Psoas muscle (tissue), 8 donors: ENCODE measurements at regions of chr22 and their contacts with region 1.

Region 1: DNA sequence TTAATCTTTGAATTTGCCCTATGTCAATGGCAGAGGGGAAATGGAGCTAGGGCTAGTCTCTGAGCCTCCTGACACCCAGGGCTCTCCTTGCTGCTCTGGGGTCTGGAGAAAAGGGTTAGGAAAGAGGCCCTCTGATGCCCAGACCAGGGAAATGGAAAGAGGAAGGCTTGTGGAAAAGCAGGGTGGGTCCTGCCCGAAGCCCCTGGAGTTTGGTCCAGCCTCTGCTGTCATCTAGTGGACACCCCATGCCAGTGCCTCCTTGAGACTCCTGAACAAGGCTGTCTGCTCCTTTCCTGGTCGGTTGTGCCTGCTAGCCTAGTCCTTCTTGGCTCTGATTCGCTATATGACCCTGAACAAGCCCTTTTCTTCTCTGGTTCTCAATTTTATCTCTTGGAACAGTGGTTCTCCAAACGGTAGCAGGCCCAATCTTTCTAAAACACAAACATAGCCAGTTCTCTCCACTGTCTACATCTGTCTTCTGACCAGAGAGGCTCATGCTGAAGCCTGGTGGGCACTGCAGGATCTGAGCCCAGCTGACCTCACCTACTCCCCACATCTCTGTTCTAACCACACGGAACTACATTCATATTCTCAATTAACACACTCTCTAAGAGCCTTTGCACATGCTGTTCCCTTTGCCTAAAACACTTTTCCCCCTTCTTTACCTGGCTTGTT is 8.8 kb upstream of the PLA2G3 start:
- DNase-seq: peak; percentile 66 to 80
- ATAC-seq: peak; percentile 93 to 96 (median 94)
- H3K4me3 ChIP-seq: no peak overlapping the region
- H3K27ac ChIP-seq: peak overlapping the region; percentile 53
- H3K4me1 ChIP-seq: no peaks in the 10 kb centered on the region
- H3K27me3 ChIP-seq: no peaks in the 10 kb centered on the region
- CTCF ChIP-seq: peak; percentile 96

Region 2: DNA sequence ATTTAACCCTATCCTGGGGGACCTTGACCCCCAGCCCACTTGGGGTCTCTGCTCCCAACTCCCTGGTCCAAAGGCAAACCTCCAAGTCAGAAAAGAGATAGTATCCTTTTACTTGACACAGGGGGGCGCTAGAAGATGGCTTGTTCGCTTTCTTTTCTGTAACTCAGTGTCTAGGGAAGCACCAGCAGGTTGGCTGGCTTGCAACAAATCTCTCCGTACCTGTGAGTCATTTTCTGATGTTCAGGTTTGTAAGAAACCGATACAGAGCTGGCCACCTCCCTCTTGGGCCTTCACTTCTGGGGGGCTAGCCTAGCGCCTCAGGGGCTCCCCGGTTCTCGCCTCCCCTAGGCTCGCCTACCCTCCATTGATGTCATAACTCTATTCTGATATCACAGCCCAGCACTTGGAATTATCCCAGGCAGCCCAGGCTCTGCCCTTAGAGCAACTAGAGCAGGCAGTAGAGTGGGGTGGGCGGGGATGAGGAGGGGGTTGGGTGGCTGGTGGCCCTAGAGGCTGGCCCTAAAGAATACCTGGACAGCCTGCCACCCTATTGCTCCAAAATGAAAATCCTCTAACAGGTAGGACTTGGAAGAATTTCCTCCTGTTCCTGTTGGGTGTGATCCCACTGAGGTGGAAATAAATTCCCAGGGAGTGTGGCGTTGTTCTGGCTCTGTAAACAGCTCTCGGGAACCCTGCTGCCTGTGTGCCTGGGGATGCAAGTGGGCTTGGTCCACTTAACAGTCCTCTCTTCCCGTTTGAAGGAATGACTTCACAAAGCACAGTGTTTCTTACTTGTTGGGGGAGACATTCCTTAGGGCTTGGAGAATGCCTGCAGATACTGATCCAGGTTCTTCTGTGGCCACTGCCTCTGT is 385.0 kb before region 1 on chr22:
- intact Hi-C with region 1: loop called in 1 of 2 experiments (anchors 10 kb)
- DNase-seq: peak in 1 of 2 donors; percentile 21
- ATAC-seq: peak; percentile 65 to 85 (median 72)
- H3K4me3 ChIP-seq: no peak overlapping the region
- H3K27ac ChIP-seq: no peak overlapping the region
- H3K4me1 ChIP-seq: no peaks in the 10 kb centered on the region
- H3K27me3 ChIP-seq: no peaks in the 10 kb centered on the region
- CTCF ChIP-seq: peak; percentile 59

Region 3: GRCh38 chr22:30947816-30948454 is 201.2 kb before region 1 on chr22:
- intact Hi-C with region 1: loop called (anchors 2 to 5 kb)
- DNase-seq: no peak
- ATAC-seq: peak; percentile 53 to 73 (median 64)
- H3K4me3 ChIP-seq: no peak overlapping the region
- H3K27ac ChIP-seq: no peak overlapping the region
- H3K4me1 ChIP-seq: peaks cover 8% of the 10 kb centered on the region
- H3K27me3 ChIP-seq: no peaks in the 10 kb centered on the region
- CTCF ChIP-seq: peak; percentile 59

Region 4: GRCh38 chr22:31019191-31019942 is 129.7 kb before region 1 on chr22:
- intact Hi-C with region 1: no loop called
- DNase-seq: no peak
- ATAC-seq: no peak
- H3K4me3 ChIP-seq: no peak overlapping the region
- H3K27ac ChIP-seq: no peak overlapping the region
- H3K4me1 ChIP-seq: no peaks in the 10 kb centered on the region
- H3K27me3 ChIP-seq: no peaks in the 10 kb centered on the region
- CTCF ChIP-seq: no peak

Region 5: GRCh38 chr22:31089160-31090100 is 59.7 kb before region 1 on chr22:
- intact Hi-C with region 1: loop called (anchors 1 to 2 kb)
- DNase-seq: peak; percentile 59 to 84
- ATAC-seq: peak; percentile 39 to 57 (median 48)
- H3K4me3 ChIP-seq: no peak overlapping the region
- H3K27ac ChIP-seq: peak overlapping the region; percentile 46
- H3K4me1 ChIP-seq: peaks cover 12% of the 10 kb centered on the region
- H3K27me3 ChIP-seq: no peaks in the 10 kb centered on the region
- CTCF ChIP-seq: peak; percentile 89

Region 6: GRCh38 chr22:31107178-31107893 is 41.8 kb before region 1 on chr22 and contains the start of gene SELENOM:
- intact Hi-C with region 1: loop called (anchors 5 kb)
- DNase-seq: peak; percentile 97 to 99
- ATAC-seq: peak; percentile 91 to 95 (median 92)
- H3K4me3 ChIP-seq: peak within 1 kb of the TSS; percentile 76
- H3K27ac ChIP-seq: peak within 1 kb of the TSS; percentile 89
- H3K4me1 ChIP-seq: peaks cover 17% of the 10 kb centered on the region
- H3K27me3 ChIP-seq: no peaks in the 10 kb centered on the region
- CTCF ChIP-seq: peak; percentile 92
- total RNA-seq, gene SELENOM: 45.4 to 68.2 (median 52.3) TPM